ENCODE measurements at regions of chr7 and their contacts with region 1.

Region 1: DNA sequence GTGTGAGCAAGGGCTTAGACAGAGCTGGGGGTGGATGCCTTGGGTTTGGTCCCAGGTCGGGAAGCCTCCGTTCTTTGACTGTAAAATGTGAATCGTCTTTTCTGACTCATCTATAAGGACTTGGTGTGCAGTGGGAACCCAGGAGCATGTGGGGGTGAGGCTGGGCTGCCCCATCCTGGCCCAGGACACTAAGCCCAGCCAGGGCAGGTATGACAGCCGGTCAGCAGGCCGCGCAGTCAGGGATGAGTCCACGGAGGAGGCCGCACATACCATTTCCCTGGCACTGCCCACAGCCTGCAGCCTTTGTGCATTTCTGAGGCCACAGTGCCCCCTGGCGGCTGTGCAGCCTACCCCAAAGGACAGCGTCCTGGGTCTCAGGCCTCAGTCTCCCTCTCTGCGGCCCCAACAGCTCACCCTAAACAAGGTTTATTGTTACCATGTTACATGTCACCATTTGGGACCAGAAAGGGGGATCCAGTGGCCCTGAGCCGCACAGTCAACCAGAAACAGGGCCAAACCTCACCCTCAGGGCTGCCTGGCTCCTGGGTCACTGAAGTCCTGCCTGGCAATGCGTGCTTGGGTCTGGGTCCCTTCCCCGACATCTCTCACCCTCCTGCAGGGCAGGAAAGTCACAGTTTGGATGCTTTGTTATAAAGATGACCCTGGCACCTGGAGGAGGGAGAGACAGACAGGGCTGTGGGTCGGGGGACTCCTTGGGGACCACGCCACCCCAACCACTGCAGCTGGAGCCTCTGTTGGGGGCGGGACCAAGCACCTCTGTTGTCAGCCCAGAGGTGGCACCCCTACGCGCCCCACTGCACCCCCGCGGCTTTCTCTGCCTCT is 14.4 kb upstream of the SH2B2 start:
- DNase-seq: peak; percentile 67 to 88
- ATAC-seq: peak; percentile 66

Region 2: DNA sequence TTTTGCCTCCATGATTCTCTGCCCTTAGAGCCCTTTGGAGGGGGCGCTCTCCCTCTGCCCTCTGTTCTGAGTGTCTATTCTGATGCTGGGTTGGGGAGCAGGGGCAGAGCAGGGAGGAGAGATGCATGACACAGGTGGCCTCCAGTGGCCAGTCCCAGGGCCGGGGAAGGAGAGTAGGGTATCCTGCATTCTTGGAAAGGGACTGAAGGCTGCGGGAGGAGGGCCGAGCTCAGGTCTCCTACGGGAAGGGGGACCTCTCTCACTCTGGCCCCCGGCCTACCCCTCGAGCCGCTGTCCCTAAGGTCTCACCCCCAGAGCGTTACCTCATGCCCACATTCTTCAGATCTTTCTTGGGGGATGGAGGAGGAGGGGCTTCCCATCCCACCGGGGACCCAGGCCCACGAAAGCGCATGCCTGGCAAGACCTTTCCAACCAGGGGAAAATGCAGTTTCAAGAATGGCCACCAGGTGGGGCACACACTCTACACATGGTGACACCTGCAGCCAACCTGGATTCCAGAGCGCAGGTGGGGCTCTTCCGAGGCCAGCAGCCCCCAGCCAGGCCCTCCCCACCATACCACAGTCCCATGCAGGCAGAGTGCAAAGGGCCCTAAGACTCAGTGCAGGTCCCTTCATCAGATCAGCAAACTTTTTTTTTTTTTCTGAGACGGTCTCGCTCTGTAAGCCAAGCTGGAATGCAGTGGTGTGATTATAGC is 729.6 kb before region 1 on chr7:
- intact Hi-C with region 1: loop called (anchors 5 to 10 kb)
- DNase-seq: peak; percentile 49 to 85
- ATAC-seq: peak; percentile 75

Measured in left colon (tissue), 2 donors.